ENCODE measurements at regions of chr15 and their contacts with region 1.

Region 1: DNA sequence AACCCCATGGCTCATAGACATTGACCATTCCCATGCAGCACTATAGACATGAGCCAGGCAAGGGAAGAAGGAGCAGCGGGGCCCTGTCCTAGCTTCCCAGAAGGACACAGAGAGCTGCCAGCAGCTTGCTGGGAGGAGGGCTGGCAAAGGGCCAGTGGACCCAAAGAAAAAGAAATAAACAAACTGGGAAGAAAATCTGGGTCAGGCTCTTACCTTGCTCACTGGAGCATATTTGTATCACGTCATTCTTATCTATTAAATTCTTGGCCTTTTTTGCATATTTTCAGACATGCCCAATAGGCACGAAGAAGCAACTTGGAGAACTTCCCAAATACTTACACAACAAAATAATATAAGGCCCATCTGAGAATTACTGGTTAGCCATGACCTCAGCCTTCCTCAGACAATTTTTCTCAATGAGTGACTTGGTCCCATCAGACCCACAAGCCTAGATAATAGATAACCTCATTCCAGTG is 28.4 kb downstream of the RASGRP1 start:
- DNase-seq: peak; percentile 100
- H3K4me3 ChIP-seq: no peak overlapping the region
- CTCF ChIP-seq: no peak

Region 2: GRCh38 chr15:38111070-38111469 is 425.2 kb before region 1 on chr15:
- CTCF ChIA-PET with region 1: no interaction called
- POLR2A ChIA-PET with region 1: no interaction called
- DNase-seq: no peak
- H3K4me3 ChIP-seq: no peak overlapping the region
- CTCF ChIP-seq: no peak

Region 3: DNA sequence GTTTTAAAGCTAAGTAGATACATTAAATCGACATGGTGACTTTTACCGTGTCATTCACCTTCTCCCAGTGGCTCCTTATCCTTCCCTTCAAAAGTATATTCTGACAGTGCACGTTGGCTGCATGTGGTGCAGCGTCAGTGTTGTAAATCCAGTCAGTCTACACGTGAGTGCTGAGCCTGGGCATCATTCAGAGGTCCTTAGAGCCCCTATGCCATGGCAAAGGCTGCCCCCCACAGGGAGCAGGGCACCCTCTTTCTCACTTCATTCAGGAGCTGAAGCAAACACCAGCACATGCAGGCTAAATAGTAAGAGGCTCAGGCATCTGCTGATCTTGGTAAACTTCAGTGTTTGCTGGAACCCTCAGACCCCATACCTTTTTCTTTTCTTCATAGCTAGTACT is 14.9 kb before region 1 on chr15:
- CTCF ChIA-PET with region 1: interaction called, 13 read pairs
- POLR2A ChIA-PET with region 1: no interaction called
- DNase-seq: no peak
- H3K4me3 ChIP-seq: no peak overlapping the region
- CTCF ChIP-seq: no peak